ENCODE measurements at regions of chr22 and their contacts with region 1.

Region 1: DNA sequence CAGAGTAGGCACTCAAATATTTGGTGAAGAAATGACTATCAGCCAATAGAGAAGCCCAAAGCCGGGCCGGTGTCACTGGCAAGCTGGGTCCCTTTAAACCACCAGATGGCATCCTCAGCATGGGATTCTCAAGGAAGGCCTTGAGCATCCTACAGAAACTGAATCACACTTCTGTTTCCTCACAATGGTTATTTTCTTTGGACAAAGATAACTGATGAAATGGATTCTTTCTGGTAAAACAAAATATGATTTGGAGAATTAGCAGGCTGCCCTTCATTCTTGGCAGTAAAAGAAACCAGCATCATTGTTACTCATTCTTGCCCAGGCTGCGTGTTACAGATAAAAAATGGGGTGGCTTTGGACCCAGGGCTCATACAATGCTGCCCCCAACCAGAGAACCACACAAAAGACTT is 30.3 kb upstream of the ASPHD2 start:
- DNase-seq: peak; percentile 31 to 69 (median 49)
- ATAC-seq: peak; percentile 87
- H3K4me3 ChIP-seq: no peak overlapping the region
- H3K27ac ChIP-seq: no peak overlapping the region
- H3K4me1 ChIP-seq: peaks cover 0 to 13% of the 10 kb centered on the region in 2 experiments; a peak in 3 of 5 replicates
- H3K27me3 ChIP-seq: no peaks in the 10 kb centered on the region; a peak in 2 of 5 replicates
- CTCF ChIP-seq: peak; percentile 67 to 87 (median 78); a peak in 5 of 6 replicates
- EP300 ChIP-seq: no peak
- POLR2A ChIP-seq: no peak
- RAD21 ChIP-seq: peak; percentile 80 to 94

Region 2: GRCh38 chr22:26302726-26303125 is 96.0 kb before region 1 on chr22:
- CTCF ChIA-PET with region 1: no interaction called
- POLR2A ChIA-PET with region 1: no interaction called
- in situ Hi-C with region 1: no loop called
- intact Hi-C with region 1: no loop called
- DNase-seq: no peak
- ATAC-seq: no peak
- H3K4me3 ChIP-seq: no peak overlapping the region
- H3K27ac ChIP-seq: no peak overlapping the region
- H3K4me1 ChIP-seq: no peaks in the 10 kb centered on the region
- H3K27me3 ChIP-seq: no peaks in the 10 kb centered on the region
- CTCF ChIP-seq: no peak
- EP300 ChIP-seq: no peak
- POLR2A ChIP-seq: no peak
- RAD21 ChIP-seq: no peak

Region 3: GRCh38 chr22:26354707-26355106 is 44.0 kb before region 1 on chr22:
- CTCF ChIA-PET with region 1: no interaction called
- POLR2A ChIA-PET with region 1: no interaction called
- in situ Hi-C with region 1: no loop called
- intact Hi-C with region 1: no loop called
- DNase-seq: no peak
- ATAC-seq: no peak
- H3K4me3 ChIP-seq: no peak overlapping the region
- H3K27ac ChIP-seq: no peak overlapping the region
- H3K4me1 ChIP-seq: no peaks in the 10 kb centered on the region
- H3K27me3 ChIP-seq: peaks cover 9 to 14% of the 10 kb centered on the region in 2 experiments; a peak in 4 of 5 replicates
- CTCF ChIP-seq: no peak
- EP300 ChIP-seq: no peak
- POLR2A ChIP-seq: no peak
- RAD21 ChIP-seq: no peak

Region 4: DNA sequence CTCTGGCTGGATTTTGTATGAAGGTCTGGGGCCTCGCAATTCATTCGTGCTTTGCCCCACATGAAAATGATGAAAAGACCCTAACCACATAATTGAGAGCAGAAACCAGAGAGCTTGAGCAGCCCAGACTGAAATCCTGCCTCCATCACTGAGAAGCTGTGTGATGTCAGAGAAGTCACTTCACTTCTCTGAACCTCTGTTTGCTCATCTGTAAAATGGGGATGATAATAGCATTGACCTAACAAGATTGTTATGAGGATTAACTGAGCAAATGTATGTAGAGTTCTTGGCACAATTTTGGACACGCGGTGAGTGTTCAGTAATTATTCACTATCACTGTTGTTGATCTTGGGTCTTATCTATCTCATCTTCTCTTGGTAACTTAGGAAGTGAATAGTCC is 25.9 kb before region 1 on chr22:
- CTCF ChIA-PET with region 1: no interaction called
- POLR2A ChIA-PET with region 1: no interaction called
- in situ Hi-C with region 1: no loop called
- intact Hi-C with region 1: no loop called
- DNase-seq: no peak
- ATAC-seq: no peak
- H3K4me3 ChIP-seq: no peak overlapping the region
- H3K27ac ChIP-seq: no peak overlapping the region
- H3K4me1 ChIP-seq: no peaks in the 10 kb centered on the region
- H3K27me3 ChIP-seq: peaks cover 0 to 15% of the 10 kb centered on the region in 2 experiments; a peak in 3 of 5 replicates
- CTCF ChIP-seq: no peak
- EP300 ChIP-seq: no peak
- POLR2A ChIP-seq: no peak
- RAD21 ChIP-seq: no peak

Region 5: GRCh38 chr22:26461188-26461810 is 62.6 kb after region 1 on chr22:
- CTCF ChIA-PET with region 1: interaction called, 57 read pairs
- POLR2A ChIA-PET with region 1: interaction called, 8 read pairs
- in situ Hi-C with region 1: loop called (anchors 5 kb)
- intact Hi-C with region 1: loop called (anchors 1 kb)
- DNase-seq: peak; percentile 51 to 55 (median 52)
- ATAC-seq: peak; percentile 89
- H3K4me3 ChIP-seq: no peak overlapping the region
- H3K27ac ChIP-seq: no peak overlapping the region
- H3K4me1 ChIP-seq: peaks cover 0 to 5% of the 10 kb centered on the region in 2 experiments; a peak in 3 of 5 replicates
- H3K27me3 ChIP-seq: no peaks in the 10 kb centered on the region
- CTCF ChIP-seq: peak; percentile 70 to 79 (median 77)
- EP300 ChIP-seq: no peak
- POLR2A ChIP-seq: no peak
- RAD21 ChIP-seq: peak; percentile 65 to 85

Region 6: DNA sequence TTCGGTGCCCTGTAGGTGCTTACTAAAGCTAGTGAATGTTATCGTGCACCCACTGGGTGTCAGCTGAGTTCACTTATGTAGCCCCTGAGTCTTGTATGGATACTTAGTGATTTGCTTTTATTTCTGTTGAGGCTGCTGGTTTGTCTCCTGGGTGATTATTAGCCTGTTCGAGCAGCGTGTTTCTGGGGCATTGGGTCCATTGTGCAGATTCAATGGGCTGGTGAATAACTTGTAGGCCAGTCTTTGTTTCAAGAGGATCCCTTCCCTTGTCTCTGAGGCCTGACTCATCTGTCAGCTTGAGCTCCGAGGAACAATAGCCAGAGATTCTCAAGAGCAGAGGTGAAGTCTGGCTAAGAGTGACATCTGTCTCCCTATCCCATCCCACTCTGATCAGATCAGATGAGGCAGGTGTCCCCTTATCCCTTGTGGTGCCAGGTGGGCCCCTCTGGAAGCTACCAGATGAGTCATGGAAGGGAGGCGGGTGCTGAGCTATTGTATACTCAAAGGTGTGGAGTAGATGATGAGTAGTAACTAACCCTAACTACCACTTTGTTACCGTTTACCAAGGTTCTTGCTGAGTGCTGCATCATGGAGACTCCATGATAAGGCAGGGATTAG is 262.3 kb after region 1 on chr22:
- CTCF ChIA-PET with region 1: no interaction called
- POLR2A ChIA-PET with region 1: no interaction called
- in situ Hi-C with region 1: loop called (anchors 5 kb)
- intact Hi-C with region 1: loop called (anchors 5 kb)
- DNase-seq: no peak
- ATAC-seq: no peak
- H3K4me3 ChIP-seq: no peak overlapping the region
- H3K27ac ChIP-seq: no peak overlapping the region
- H3K4me1 ChIP-seq: peaks cover 13 to 22% of the 10 kb centered on the region in 2 experiments; a peak in 4 of 5 replicates
- H3K27me3 ChIP-seq: no peaks in the 10 kb centered on the region; a peak in 1 of 5 replicates
- CTCF ChIP-seq: no peak
- EP300 ChIP-seq: no peak
- POLR2A ChIP-seq: no peak
- RAD21 ChIP-seq: no peak

Region 7: GRCh38 chr22:26669060-26669481 is 270.3 kb after region 1 on chr22:
- CTCF ChIA-PET with region 1: no interaction called
- POLR2A ChIA-PET with region 1: no interaction called
- in situ Hi-C with region 1: loop called (anchors 5 kb)
- intact Hi-C with region 1: loop called (anchors 5 kb)
- DNase-seq: peak in 1 of 4 experiments; percentile 19
- ATAC-seq: peak; percentile 32
- H3K4me3 ChIP-seq: no peak overlapping the region
- H3K27ac ChIP-seq: no peak overlapping the region
- H3K4me1 ChIP-seq: peaks cover 9 to 18% of the 10 kb centered on the region in 2 experiments; a peak in 4 of 5 replicates
- H3K27me3 ChIP-seq: no peaks in the 10 kb centered on the region
- CTCF ChIP-seq: peak; percentile 43 to 70 (median 44)
- EP300 ChIP-seq: no peak
- POLR2A ChIP-seq: no peak
- RAD21 ChIP-seq: no peak